PC-3 (cell line): ENCODE measurements at regions of chr15 and their contacts with region 1.

Region 1: DNA sequence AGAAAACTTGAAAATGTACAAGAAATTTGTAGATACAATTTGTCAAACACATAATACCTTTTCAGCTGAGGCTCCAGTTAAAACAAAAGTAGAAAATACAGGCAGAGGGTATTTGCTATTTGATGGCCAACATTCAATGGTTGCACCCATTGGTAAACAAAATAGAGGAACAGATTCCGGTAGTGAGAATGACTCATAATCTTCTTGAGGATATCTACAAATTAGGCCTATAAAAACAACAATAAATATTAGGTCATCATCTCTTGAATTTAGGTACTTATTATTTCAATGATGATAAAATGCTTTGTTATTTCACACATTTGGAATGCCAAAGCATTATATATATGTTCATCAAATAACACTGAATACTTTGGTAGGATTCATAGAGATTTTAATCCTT is 53.4 kb downstream of the DENND4A start:
- DNase-seq: peak; percentile 58
- ATAC-seq: peak; percentile 81
- H3K4me3 ChIP-seq: no peak overlapping the region
- H3K27ac ChIP-seq: 0 out of 2 replicates have a peak overlapping the region, but pooled peaks have one; percentile 9
- H3K4me1 ChIP-seq: peaks cover 20% of the 10 kb centered on the region
- H3K27me3 ChIP-seq: no peaks in the 10 kb centered on the region
- CTCF ChIP-seq: no peak

Region 2: DNA sequence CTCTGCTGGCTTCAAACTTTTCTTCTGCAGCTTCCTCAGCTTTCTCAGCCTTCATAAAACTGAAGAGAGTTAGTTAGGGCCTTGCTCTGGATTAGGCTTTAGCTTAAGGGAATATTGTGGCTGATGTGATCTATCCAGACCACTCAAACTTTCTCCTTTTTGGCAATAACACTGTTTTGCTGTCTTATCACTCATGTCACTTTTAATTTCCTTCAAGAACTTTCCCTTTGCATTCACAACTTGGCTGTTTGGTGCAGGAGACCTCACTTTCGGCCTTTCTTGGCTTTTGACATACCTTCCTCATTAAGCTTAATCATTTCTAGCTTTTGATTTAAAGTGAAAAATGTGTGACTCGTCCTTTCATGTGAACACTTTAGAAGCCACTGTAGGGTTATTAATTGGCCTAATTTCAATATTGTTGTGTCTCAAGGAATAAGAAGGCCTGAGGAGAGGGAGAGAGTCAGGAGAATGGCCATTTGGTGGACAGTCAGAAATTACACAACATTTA is 56.2 kb before region 1 on chr15:
- CTCF ChIA-PET with region 1: no interaction called
- POLR2A ChIA-PET with region 1: no interaction called
- intact Hi-C with region 1: no loop called
- DNase-seq: no peak
- ATAC-seq: no peak
- H3K4me3 ChIP-seq: no peak overlapping the region
- H3K27ac ChIP-seq: no peak overlapping the region
- H3K4me1 ChIP-seq: no peaks in the 10 kb centered on the region
- H3K27me3 ChIP-seq: no peaks in the 10 kb centered on the region
- CTCF ChIP-seq: no peak

Region 3: DNA sequence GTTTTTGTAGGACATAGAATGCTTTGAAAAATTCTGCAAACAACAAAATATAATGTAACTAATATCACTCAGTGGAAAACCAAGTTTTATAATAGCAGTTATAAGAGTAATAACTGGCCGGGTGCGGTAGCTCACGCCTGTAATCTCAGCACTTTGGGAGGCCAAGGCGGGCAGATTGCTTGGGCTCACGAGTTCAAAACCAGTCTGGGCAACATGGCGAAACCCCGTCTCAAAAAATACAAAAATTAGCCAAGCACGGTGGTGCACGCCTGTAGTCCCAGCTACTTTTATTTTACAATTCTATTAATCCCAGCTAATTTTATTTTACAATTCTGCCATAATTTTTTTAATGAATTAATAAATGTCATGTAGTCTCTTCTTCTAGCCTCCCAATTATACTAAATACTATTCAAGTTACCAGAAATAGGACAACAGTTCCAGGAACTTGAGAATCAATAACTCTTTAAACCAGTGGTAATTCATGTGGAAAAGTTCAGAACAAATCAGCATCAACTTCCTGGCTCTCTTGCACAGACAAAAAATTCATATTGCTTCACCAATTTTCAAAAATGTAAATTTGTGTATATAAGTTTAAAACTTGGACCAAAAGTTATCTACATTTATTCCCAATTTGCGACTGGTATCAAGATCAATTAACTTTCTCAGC is 51.2 kb after region 1 on chr15:
- CTCF ChIA-PET with region 1: no interaction called
- POLR2A ChIA-PET with region 1: no interaction called
- intact Hi-C with region 1: loop called (anchors 5 kb)
- DNase-seq: no peak
- ATAC-seq: no peak
- H3K4me3 ChIP-seq: peak overlapping the region; percentile 88; the same call in 1 of the 2 replicates
- H3K27ac ChIP-seq: no peak overlapping the region
- H3K4me1 ChIP-seq: peaks cover 12% of the 10 kb centered on the region
- H3K27me3 ChIP-seq: no peaks in the 10 kb centered on the region
- CTCF ChIP-seq: no peak